ENCODE measurements at regions of chr15 and their contacts with region 1.

Region 1: DNA sequence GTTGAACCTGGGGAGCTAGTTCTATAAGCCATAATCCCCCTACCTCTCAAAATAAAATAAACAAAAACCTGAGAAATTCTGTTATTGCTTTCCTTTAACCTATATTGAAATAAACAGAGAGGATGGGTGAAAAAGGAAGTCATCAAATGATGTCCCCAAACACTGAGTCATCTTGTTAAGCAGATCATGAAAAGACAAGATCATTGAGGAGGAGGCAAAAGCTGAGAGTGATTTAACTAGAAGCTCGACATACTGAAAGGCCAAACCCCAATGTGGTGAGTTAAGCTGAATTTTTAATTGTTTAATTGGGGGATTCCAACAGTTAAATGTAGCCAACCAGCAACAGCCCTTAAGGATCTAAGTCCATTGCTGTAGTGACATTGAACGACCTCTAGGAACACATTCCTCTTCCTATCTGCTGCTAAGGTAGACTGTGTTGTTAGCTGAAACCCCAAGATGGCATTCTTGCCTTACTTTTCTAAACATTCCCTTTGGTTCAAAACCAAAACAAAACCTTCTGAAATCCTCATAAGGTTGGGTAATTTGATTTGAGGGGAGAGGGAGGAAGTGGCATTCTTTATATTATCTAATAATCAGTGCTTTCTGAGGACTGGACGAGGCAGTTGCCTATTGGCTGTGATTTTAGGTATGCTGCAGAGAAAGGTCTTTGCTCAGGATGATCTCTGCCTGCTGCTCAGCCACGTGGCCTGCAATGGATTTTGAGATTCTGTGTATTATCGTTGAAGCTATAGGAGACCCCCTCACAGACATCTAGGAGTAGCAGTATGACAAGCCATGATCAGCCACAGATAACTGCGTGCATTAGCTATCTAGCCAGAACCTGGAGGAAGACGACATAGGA is 62.7 kb upstream of the BNIP2 start:
- DNase-seq: peak in 2 of 9 experiments; percentile 69 to 81
- ATAC-seq: peak; percentile 98
- H3K4me3 ChIP-seq: no peak overlapping the region
- H3K4me3 Mint-ChIP-seq: no peak overlapping the region
- H3K27ac ChIP-seq: no peak overlapping the region
- H3K27ac Mint-ChIP-seq: peak overlapping the region; percentile 49
- H3K4me1 ChIP-seq: peaks cover 6% of the 10 kb centered on the region
- H3K4me1 Mint-ChIP-seq: peaks cover 9% of the 10 kb centered on the region
- H3K27me3 ChIP-seq: no peaks in the 10 kb centered on the region
- H3K27me3 Mint-ChIP-seq: peaks cover 3% of the 10 kb centered on the region
- CTCF ChIP-seq: peak; percentile 95

Region 2: DNA sequence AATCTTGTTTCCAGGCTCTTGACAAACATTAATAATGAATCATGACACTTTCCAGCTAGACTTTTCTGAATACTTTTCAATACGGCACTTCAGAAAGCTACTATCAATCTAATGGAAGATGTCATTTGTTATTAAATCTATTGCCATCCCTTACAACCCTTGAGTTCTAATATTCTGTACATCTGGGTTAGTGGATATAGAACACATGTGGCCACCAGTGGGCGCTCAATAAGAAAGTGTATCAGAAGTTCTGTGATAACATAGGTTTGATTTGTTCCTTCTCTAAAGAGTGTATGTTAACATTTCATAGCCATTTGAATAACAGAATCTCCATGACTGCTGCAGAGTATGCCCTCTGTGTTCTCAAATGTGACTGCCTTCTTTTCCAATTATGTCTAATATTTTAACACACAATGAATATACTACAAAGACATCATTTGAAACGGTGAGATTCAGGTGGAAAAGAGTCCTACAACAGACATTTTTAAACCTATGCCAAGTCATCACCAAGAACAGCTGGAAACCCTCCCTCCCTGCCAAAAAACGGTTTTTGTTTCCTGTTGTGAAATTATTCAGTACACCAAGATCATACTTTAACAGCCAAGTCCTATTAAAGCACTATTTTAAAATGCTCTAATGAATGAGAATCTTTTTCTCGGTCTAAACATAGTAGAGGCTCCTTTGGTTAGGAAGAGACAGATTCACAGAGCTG is 1708.4 kb before region 1 on chr15:
- CTCF ChIA-PET with region 1: no interaction called
- POLR2A ChIA-PET with region 1: no interaction called
- intact Hi-C with region 1: no loop called
- DNase-seq: peak in 7 of 9 experiments; percentile 8 to 50 (median 32)
- ATAC-seq: no peak
- H3K4me3 ChIP-seq: no peak overlapping the region
- H3K4me3 Mint-ChIP-seq: no peak overlapping the region
- H3K27ac ChIP-seq: no peak overlapping the region
- H3K27ac Mint-ChIP-seq: no peak overlapping the region
- H3K4me1 ChIP-seq: no peaks in the 10 kb centered on the region
- H3K4me1 Mint-ChIP-seq: no peaks in the 10 kb centered on the region
- H3K27me3 ChIP-seq: peaks cover 0 to 4% of the 10 kb centered on the region in 2 experiments
- H3K27me3 Mint-ChIP-seq: peaks cover 34% of the 10 kb centered on the region
- CTCF ChIP-seq: peak; percentile 64

Region 3: DNA sequence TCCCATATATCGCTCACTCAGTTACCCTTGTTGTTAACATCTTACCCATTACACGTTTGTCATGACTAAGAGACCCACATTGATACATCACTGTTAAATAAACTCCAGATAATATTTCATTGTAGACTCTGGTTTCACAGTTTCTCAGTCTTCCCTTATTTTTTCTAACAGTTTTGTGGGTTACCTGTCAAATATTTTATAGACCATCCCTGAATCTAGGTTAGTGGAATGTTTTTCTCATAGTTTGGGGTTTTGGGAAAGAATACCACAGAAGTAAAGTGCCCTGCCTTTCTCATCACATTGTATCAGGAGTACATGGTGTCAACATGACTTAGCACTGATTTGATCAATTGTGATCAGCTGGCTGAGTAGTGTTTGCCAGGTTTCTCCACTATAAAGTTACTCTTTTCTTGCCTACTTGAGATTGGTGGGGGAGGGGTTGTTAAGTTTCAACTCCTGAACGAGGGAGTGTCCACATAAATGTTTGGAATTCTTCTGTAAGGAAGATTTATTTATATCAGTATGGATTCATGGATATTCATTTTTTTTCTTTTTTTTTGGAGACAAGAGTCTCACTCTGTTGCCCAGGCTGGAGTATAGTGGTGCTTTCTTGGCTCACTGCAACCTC is 738.4 kb before region 1 on chr15:
- CTCF ChIA-PET with region 1: no interaction called
- POLR2A ChIA-PET with region 1: no interaction called
- intact Hi-C with region 1: no loop called
- DNase-seq: no peak
- ATAC-seq: no peak
- H3K4me3 ChIP-seq: no peak overlapping the region
- H3K4me3 Mint-ChIP-seq: no peak overlapping the region
- H3K27ac ChIP-seq: no peak overlapping the region
- H3K27ac Mint-ChIP-seq: no peak overlapping the region
- H3K4me1 ChIP-seq: no peaks in the 10 kb centered on the region
- H3K4me1 Mint-ChIP-seq: peaks cover 41% of the 10 kb centered on the region
- H3K27me3 ChIP-seq: no peaks in the 10 kb centered on the region
- H3K27me3 Mint-ChIP-seq: no peaks in the 10 kb centered on the region
- CTCF ChIP-seq: no peak

Region 4: DNA sequence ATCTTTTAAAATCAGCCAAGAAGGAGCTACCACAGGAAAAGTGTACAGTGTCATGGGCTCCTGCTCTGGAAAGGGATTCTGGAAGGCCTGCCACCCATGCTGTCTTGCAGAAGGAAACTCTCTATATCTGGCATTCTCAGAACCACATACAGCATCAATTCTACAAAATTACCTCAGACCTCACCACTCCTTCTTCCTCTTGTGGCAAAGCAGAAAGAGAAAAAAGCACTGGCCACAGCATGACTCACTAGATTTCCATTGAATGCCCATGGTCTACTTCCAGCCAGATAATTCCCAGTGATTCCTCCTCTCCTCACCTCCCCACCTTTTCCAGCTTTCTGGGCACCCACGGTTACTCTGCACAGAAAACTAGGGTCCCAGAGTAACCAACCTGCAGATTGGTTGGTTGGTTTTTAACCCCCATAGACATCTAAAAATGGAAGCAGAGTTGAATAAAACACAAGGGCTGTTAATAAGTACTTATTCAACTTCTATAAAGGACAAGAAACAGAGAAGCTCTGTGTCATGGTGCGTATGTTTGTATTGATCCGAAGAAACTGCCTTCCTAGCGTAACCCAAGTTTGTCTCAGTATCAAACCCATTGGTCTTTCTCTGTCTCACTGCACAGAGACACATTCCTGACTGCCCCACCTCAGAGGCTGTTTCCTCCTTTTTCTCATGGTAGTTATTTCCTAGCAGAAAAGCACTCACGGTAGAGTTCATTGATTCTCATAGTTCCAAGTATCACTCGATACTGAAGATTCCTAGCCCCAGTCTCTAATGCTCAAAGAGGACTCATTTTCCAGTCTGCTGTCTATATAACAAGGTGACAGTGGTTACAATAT is 477.4 kb before region 1 on chr15:
- CTCF ChIA-PET with region 1: no interaction called
- POLR2A ChIA-PET with region 1: no interaction called
- intact Hi-C with region 1: no loop called
- DNase-seq: no peak
- ATAC-seq: no peak
- H3K4me3 ChIP-seq: no peak overlapping the region
- H3K4me3 Mint-ChIP-seq: no peak overlapping the region
- H3K27ac ChIP-seq: no peak overlapping the region
- H3K27ac Mint-ChIP-seq: no peak overlapping the region
- H3K4me1 ChIP-seq: no peaks in the 10 kb centered on the region
- H3K4me1 Mint-ChIP-seq: peaks cover 4% of the 10 kb centered on the region
- H3K27me3 ChIP-seq: no peaks in the 10 kb centered on the region
- H3K27me3 Mint-ChIP-seq: no peaks in the 10 kb centered on the region
- CTCF ChIP-seq: no peak

Region 5: GRCh38 chr15:59642351-59642750 is 109.4 kb before region 1 on chr15:
- CTCF ChIA-PET with region 1: no interaction called
- POLR2A ChIA-PET with region 1: no interaction called
- intact Hi-C with region 1: no loop called
- DNase-seq: no peak
- ATAC-seq: no peak
- H3K4me3 ChIP-seq: no peak overlapping the region
- H3K4me3 Mint-ChIP-seq: no peak overlapping the region
- H3K27ac ChIP-seq: no peak overlapping the region
- H3K27ac Mint-ChIP-seq: no peak overlapping the region
- H3K4me1 ChIP-seq: no peaks in the 10 kb centered on the region
- H3K4me1 Mint-ChIP-seq: no peaks in the 10 kb centered on the region
- H3K27me3 ChIP-seq: no peaks in the 10 kb centered on the region
- H3K27me3 Mint-ChIP-seq: no peaks in the 10 kb centered on the region
- CTCF ChIP-seq: peak; percentile 21

Region 6: DNA sequence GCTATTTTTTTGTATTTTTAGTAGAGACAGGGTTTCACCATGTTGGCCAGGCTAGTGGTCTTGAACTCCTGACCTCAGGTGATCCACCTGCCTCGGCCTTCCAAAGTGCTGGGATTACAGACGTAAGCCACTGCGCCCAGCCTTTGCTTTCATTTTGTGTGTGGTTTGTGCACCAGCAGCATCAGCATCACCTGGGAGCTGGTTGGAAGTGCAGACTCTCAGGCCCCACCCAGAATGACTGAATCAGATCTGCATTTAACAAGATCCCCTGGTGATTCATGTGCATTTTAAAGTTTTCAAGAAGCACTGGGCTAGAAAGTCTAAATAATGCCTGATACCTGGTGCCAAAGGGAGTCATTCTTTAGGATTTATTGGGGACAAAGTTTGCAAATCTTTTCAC is 10.8 kb after region 1 on chr15:
- CTCF ChIA-PET with region 1: interaction called, 19 read pairs
- POLR2A ChIA-PET with region 1: no interaction called
- intact Hi-C with region 1: no loop called
- DNase-seq: no peak
- ATAC-seq: no peak
- H3K4me3 ChIP-seq: no peak overlapping the region
- H3K4me3 Mint-ChIP-seq: no peak overlapping the region
- H3K27ac ChIP-seq: no peak overlapping the region
- H3K27ac Mint-ChIP-seq: no peak overlapping the region
- H3K4me1 ChIP-seq: no peaks in the 10 kb centered on the region
- H3K4me1 Mint-ChIP-seq: peaks cover 5% of the 10 kb centered on the region
- H3K27me3 ChIP-seq: no peaks in the 10 kb centered on the region
- H3K27me3 Mint-ChIP-seq: no peaks in the 10 kb centered on the region
- CTCF ChIP-seq: no peak

Region 7: GRCh38 chr15:59814409-59814808 is 62.6 kb after region 1 on chr15:
- CTCF ChIA-PET with region 1: interaction called, 11 read pairs
- POLR2A ChIA-PET with region 1: no interaction called
- intact Hi-C with region 1: no loop called
- DNase-seq: peak in 6 of 9 experiments; percentile 20 to 79 (median 58)
- ATAC-seq: peak; percentile 89
- H3K4me3 ChIP-seq: no peak overlapping the region
- H3K4me3 Mint-ChIP-seq: peak overlapping the region; percentile 12
- H3K27ac ChIP-seq: peak overlapping the region in 1 of 2 experiments; percentile 22
- H3K27ac Mint-ChIP-seq: peak overlapping the region; percentile 87
- H3K4me1 ChIP-seq: peaks cover 22% of the 10 kb centered on the region
- H3K4me1 Mint-ChIP-seq: peaks cover 36% of the 10 kb centered on the region
- H3K27me3 ChIP-seq: no peaks in the 10 kb centered on the region
- H3K27me3 Mint-ChIP-seq: no peaks in the 10 kb centered on the region
- CTCF ChIP-seq: no peak

Region 8: GRCh38 chr15:59976480-59977271 is 224.9 kb after region 1 on chr15:
- CTCF ChIA-PET with region 1: interaction called, 7 read pairs
- POLR2A ChIA-PET with region 1: no interaction called
- intact Hi-C with region 1: loop called in 1 of 2 experiments (anchors 10 kb)
- DNase-seq: peak in 8 of 9 experiments; percentile 41 to 86 (median 64)
- ATAC-seq: peak; percentile 93
- H3K4me3 ChIP-seq: no peak overlapping the region
- H3K4me3 Mint-ChIP-seq: peak overlapping the region; percentile 40
- H3K27ac ChIP-seq: no peak overlapping the region
- H3K27ac Mint-ChIP-seq: peak overlapping the region; percentile 67
- H3K4me1 ChIP-seq: peaks cover 25% of the 10 kb centered on the region
- H3K4me1 Mint-ChIP-seq: peaks cover 30% of the 10 kb centered on the region
- H3K27me3 ChIP-seq: no peaks in the 10 kb centered on the region
- H3K27me3 Mint-ChIP-seq: peaks cover 2% of the 10 kb centered on the region
- CTCF ChIP-seq: no peak

Region 9: GRCh38 chr15:60128000-60128376 is 376.2 kb after region 1 on chr15:
- CTCF ChIA-PET with region 1: interaction called, 12 read pairs
- POLR2A ChIA-PET with region 1: no interaction called
- intact Hi-C with region 1: loop called (anchors 2 to 5 kb)
- DNase-seq: peak in 1 of 9 experiments; percentile 50
- ATAC-seq: no peak
- H3K4me3 ChIP-seq: peak overlapping the region; percentile 54 to 71
- H3K4me3 Mint-ChIP-seq: peak overlapping the region; percentile 83
- H3K27ac ChIP-seq: peak overlapping the region; percentile 70 to 86
- H3K27ac Mint-ChIP-seq: peak overlapping the region; percentile 91
- H3K4me1 ChIP-seq: peaks cover 5% of the 10 kb centered on the region
- H3K4me1 Mint-ChIP-seq: peaks cover 32% of the 10 kb centered on the region
- H3K27me3 ChIP-seq: no peaks in the 10 kb centered on the region
- H3K27me3 Mint-ChIP-seq: peaks cover 2% of the 10 kb centered on the region
- CTCF ChIP-seq: no peak

Region 10: DNA sequence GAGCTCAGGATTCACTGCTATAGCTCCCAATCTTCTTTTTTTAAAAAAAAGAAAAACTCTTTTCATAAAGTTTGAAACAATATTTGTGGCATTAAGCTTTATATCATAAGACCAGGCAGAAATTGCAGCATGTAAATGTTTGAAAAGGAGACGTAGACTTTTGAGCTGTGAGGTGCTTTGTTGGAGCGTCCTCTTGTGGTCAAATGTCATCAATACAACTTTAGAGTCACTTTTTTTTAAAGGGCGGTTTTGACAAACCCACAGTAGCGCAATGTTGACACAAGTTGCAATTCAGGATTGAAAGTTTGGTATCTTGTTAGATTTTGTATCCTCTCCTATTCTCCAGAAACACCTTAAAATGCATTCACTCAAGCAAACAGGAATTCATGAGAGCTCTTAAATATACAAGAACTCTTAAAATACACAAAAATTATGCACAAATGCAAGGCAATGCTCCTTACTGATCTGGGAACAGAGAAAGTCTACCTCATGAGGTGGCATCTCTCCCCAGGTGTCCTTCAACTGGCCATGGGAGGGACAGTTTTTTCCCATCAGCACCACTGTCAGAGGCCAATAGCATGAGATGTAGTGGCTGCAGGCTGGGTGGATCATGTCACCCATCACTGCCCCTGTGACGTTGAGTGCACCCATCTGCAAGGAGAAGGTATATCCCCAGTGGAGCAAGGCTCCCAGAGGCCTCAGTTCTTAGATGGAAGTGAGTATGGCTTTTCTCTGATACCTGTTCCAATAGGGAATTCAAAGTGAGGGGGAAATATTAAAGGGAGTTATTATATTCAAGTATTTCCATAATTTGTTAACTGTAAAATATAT is 575.3 kb after region 1 on chr15:
- CTCF ChIA-PET with region 1: interaction called, 21 read pairs
- POLR2A ChIA-PET with region 1: no interaction called
- intact Hi-C with region 1: loop called (anchors 1 kb)
- DNase-seq: peak in 5 of 9 experiments; percentile 8 to 72 (median 32)
- ATAC-seq: peak; percentile 40
- H3K4me3 ChIP-seq: no peak overlapping the region
- H3K4me3 Mint-ChIP-seq: no peak overlapping the region
- H3K27ac ChIP-seq: no peak overlapping the region
- H3K27ac Mint-ChIP-seq: no peak overlapping the region
- H3K4me1 ChIP-seq: no peaks in the 10 kb centered on the region
- H3K4me1 Mint-ChIP-seq: peaks cover 2% of the 10 kb centered on the region
- H3K27me3 ChIP-seq: peaks cover 0 to 5% of the 10 kb centered on the region in 2 experiments
- H3K27me3 Mint-ChIP-seq: peaks cover 34% of the 10 kb centered on the region
- CTCF ChIP-seq: peak; percentile 73